Naive thymus-derived CD4-positive, alpha-beta T cell (primary cell): ENCODE measurements at regions of chr15 and their contacts with region 1.

Region 1: DNA sequence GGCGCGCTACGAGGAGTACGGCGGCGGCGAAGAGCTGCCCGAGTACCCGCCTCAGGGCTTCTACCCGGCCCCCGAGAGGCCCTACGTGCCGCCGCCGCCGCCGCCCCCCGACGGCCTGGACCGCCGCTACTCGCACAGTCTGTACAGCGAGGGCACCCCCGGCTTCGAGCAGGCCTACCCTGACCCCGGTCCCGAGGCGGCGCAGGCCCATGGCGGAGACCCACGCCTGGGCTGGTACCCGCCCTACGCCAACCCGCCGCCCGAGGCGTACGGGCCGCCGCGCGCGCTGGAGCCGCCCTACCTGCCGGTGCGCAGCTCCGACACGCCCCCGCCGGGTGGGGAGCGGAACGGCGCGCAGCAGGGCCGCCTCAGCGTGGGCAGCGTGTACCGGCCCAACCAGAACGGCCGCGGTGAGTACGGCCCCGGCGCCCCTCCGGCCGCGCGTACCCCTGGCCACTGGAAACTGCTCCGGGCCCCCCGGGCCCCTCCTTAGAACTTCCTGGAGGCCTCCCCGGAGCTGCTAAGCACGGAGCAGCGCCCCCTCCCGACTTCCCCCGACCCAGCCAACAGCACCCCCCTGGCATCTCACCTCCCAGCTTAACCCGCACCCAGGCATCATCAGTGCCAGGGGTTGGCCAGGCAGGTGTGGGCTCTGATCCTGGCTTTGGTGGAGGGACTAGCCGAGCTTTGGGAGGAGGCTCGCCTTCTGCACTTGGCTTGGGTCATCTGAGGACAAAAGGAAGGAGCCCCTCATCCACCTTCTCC is 1.4 kb downstream of the LOXL1 start:
- DNase-seq: peak; percentile 69 to 86 (median 84)
- ATAC-seq: peak; percentile 93
- H3K4me3 ChIP-seq: peak overlapping the region; percentile 74
- H3K4me3 Mint-ChIP-seq: peak overlapping the region; percentile 62 to 83 (median 74)
- H3K27ac ChIP-seq: peak overlapping the region; percentile 77
- H3K27ac Mint-ChIP-seq: peak overlapping the region; percentile 26 to 69 (median 51)
- H3K4me1 ChIP-seq: peaks cover 15 to 21% of the 10 kb centered on the region in 2 donors
- H3K4me1 Mint-ChIP-seq: peaks cover 25 to 55% (median 39%) of the 10 kb centered on the region in 7 donors
- H3K27me3 ChIP-seq: no peaks in the 10 kb centered on the region
- H3K27me3 Mint-ChIP-seq: peaks cover 0 to 6% (median 0%) of the 10 kb centered on the region in 5 donors

Region 2: DNA sequence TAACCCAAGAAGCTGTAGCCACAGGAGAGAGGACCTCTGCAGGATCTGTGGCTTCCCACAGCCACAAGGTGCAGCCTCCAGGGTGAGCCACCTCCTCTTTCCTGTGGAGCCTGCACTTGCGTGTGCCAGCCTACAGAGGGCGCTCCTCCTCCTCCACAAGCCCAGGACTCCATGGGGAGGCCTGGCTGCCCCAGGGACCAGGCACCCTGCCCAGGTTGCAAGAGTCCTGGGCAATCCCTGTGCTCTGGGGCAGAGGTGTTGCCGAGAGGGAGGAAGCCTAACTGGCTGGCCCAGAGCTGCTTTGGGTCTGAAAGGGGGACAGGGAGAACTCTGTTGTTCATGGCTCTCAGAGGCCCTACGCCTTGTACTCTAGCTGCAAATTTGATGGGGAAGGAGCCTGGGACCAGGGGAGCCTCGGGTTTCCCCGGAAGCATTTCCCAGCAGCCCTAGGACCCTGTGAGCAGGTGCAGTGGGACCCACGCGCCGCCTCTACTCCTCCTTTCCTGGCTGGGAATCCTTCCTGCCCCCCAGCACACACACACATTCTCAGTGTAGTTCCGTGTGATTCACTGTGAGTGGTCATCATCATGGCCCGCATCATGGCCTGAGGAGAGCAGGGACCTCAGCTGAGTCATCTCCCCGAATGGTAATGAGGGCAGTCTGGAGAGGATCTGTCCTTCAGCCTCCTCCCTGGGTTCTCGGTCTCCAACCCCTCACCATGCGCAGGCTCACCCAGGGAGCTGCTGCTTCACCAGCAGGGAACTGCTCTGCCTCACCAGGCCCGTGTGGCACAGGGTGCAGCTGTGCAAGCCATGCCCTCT is 30.0 kb before region 1 on chr15:
- CTCF ChIA-PET with region 1: no interaction called
- POLR2A ChIA-PET with region 1: no interaction called
- intact Hi-C with region 1: loop called in 1 of 2 experiments (anchors 1 kb)
- DNase-seq: peak in 7 of 9 donors; percentile 13 to 68 (median 27)
- ATAC-seq: peak; percentile 91
- H3K4me3 ChIP-seq: no peak overlapping the region
- H3K4me3 Mint-ChIP-seq: no peak overlapping the region
- H3K27ac ChIP-seq: no peak overlapping the region
- H3K27ac Mint-ChIP-seq: no peak overlapping the region
- H3K4me1 ChIP-seq: no peaks in the 10 kb centered on the region
- H3K4me1 Mint-ChIP-seq: peaks cover 0 to 5% (median 0%) of the 10 kb centered on the region in 7 donors
- H3K27me3 ChIP-seq: no peaks in the 10 kb centered on the region
- H3K27me3 Mint-ChIP-seq: peaks cover 0 to 3% (median 0%) of the 10 kb centered on the region in 5 donors

Region 3: DNA sequence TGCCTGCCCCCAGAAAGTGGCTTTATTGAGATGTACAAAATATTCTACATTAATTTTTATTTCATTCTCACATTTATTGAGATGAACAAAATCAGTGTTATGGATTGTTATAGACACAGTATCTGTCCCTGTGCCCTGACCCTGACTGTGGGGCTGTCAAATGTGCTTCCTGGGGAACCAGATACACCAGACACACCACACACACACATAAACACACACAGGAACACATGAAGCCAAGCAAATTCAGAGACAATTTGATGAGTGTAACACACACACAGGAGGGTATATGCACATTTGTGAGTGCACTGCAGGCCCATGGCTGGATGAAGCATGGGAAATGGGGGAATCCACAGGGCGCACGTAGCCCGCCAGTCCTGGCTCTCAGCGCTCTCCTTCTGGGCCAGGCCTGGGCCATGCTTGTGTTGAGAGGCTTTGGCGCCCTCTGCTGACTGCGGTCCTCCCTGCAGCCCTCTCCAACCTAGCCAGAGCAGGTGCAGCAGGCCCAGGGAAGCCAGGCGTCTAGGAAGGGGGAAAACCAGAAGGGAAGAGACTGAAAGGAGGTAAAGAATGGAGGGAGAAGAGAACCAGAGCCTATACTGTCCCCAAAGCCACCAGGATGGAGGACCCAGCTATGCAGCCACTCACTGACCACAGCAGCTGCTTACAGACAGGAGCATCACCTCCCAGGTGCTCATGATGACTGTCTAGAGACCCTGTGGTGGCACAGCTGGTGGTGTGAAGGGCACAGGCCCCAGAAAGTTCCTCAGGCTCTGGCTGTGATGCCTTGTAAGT is 19.4 kb before region 1 on chr15:
- CTCF ChIA-PET with region 1: interaction called, 6 read pairs
- POLR2A ChIA-PET with region 1: interaction called, 5 read pairs
- intact Hi-C with region 1: loop called in 1 of 2 experiments (anchors 1 kb)
- DNase-seq: peak; percentile 34 to 78 (median 56)
- ATAC-seq: peak; percentile 96
- H3K4me3 ChIP-seq: no peak overlapping the region
- H3K4me3 Mint-ChIP-seq: no peak overlapping the region
- H3K27ac ChIP-seq: no peak overlapping the region
- H3K27ac Mint-ChIP-seq: no peak overlapping the region
- H3K4me1 ChIP-seq: no peaks in the 10 kb centered on the region
- H3K4me1 Mint-ChIP-seq: peaks cover 0 to 21% (median 0%) of the 10 kb centered on the region in 7 donors
- H3K27me3 ChIP-seq: no peaks in the 10 kb centered on the region
- H3K27me3 Mint-ChIP-seq: no peaks in the 10 kb centered on the region

Region 4: GRCh38 chr15:74146277-74146800 is 218.7 kb after region 1 on chr15:
- CTCF ChIA-PET with region 1: no interaction called
- POLR2A ChIA-PET with region 1: no interaction called
- intact Hi-C with region 1: no loop called
- DNase-seq: no peak
- ATAC-seq: no peak
- H3K4me3 ChIP-seq: no peak overlapping the region
- H3K4me3 Mint-ChIP-seq: no peak overlapping the region
- H3K27ac ChIP-seq: no peak overlapping the region
- H3K27ac Mint-ChIP-seq: no peak overlapping the region
- H3K4me1 ChIP-seq: no peaks in the 10 kb centered on the region
- H3K4me1 Mint-ChIP-seq: no peaks in the 10 kb centered on the region
- H3K27me3 ChIP-seq: no peaks in the 10 kb centered on the region
- H3K27me3 Mint-ChIP-seq: peaks cover 44 to 57% (median 48%) of the 10 kb centered on the region in 5 donors